Ovary (tissue), 10 donors: ENCODE measurements at regions of chr20 and their contacts with region 1.

Region 1: GRCh38 chr20:59743767-59744485 is 139.6 kb downstream of the PHACTR3 start:
- DNase-seq: no peak
- H3K4me3 ChIP-seq: no peak overlapping the region
- H3K27ac ChIP-seq: no peak overlapping the region
- H3K4me1 ChIP-seq: peaks cover 3% of the 10 kb centered on the region
- H3K27me3 ChIP-seq: no peaks in the 10 kb centered on the region
- CTCF ChIP-seq: no peak
- EP300 ChIP-seq: no peak
- POLR2A ChIP-seq: no peak

Region 2: DNA sequence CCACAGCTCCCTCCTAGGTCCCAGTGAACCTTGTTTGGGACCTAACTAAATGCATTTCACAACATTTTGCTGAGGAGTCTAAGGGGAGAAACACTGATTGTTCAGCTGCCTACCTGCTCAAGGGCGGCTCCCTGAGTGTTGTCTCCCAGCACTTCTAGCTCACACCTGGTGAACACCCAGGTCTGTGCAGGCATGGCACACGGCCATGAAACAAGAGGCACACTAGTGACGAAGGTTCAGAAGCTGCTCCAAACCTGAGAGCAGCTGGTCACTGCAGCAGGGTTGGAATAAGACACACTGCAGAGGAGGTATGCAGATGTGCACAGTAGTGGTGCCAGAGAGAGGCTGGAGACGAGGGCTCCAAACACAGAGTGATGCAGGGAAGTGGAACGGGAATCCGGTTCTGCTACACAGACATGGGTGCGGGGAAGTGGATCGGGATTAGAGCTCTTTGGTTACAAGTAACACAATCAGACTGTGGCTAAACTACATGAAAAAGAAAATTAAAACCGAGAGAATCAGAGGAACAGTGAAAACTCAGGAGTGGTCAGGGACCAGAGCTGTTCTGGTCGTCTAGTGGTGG is 1022.0 kb after region 1 on chr20:
- intact Hi-C with region 1: no loop called
- DNase-seq: no peak
- H3K4me3 ChIP-seq: no peak overlapping the region
- H3K27ac ChIP-seq: no peak overlapping the region
- H3K4me1 ChIP-seq: no peaks in the 10 kb centered on the region
- H3K27me3 ChIP-seq: no peaks in the 10 kb centered on the region
- CTCF ChIP-seq: no peak
- EP300 ChIP-seq: no peak
- POLR2A ChIP-seq: no peak

Region 3: DNA sequence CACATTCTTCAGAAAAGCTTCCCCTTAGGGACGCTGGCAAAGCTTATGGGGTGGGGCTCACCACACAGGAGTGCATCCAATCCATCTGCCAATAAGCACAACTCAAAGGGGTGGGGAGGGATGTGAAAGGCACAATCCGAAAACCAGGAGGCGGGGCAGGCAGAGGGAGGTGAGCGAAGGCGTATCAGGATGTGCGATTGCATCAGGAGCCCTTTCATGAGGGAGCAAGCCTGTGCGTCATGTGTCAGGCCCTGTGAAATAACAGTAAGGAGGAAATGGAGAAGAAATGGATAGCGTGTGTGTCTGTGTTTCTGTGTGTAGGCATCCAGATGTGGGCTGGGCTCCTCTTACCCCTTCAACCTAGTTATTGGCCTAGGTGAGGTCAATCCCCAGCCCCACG is 1125.7 kb after region 1 on chr20:
- intact Hi-C with region 1: loop called in 1 of 4 experiments (anchors 10 kb)
- DNase-seq: no peak
- H3K4me3 ChIP-seq: no peak overlapping the region
- H3K27ac ChIP-seq: no peak overlapping the region
- H3K4me1 ChIP-seq: no peaks in the 10 kb centered on the region
- H3K27me3 ChIP-seq: no peaks in the 10 kb centered on the region
- CTCF ChIP-seq: no peak
- EP300 ChIP-seq: no peak
- POLR2A ChIP-seq: no peak